Activated naive CD4-positive, alpha-beta T cell treated with anti-CD3 and anti-CD28 coated beads, Interleukin-2, amount 10 ng/mL, durations not matched to agents 7 days and 5 days (primary cell): ENCODE measurements at regions of chr6 and their contacts with region 1.

Region 1: DNA sequence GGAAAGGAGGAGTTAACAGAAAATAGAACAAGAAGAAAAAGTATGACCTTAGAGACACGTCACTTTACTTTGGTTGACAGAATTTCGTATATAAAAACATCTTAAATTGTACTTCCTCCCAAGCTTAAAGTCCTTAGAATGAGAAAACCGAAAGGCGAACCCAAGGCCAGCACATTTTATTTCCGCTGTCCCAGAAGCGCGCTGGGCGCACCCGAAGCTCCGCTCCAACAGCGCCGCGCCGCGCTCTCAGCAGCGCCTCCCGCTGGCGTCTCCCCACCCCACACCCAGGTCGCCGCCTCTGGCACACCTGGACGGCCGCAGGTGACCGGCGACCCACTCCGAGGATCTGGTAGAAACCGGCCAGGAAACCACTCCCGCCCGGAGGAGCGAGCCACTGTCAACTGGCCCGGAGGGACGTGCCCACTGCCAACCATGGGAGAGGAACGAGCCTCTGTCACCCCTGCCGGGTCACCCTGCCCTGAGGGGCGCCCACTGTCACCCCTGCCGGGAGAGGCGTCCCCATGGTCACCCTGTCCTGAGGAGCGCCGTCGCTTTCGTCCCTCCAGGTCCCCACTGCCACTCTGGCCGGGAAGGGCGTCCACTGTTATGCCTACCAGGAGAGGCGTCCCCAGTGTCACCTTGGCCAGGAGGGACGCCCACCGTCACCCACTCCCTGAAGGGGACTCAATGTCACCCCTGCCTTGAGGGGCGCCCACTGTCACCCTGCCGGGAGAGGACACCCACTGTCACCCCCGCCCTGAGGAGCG is 824 bp downstream of the MPC1 start:
- DNase-seq: peak; percentile 79
- H3K4me3 Mint-ChIP-seq: peak overlapping the region; percentile 91
- H3K27ac Mint-ChIP-seq: peak overlapping the region; percentile 90
- H3K4me1 Mint-ChIP-seq: peaks cover 24% of the 10 kb centered on the region
- H3K27me3 Mint-ChIP-seq: no peaks in the 10 kb centered on the region

Region 2: DNA sequence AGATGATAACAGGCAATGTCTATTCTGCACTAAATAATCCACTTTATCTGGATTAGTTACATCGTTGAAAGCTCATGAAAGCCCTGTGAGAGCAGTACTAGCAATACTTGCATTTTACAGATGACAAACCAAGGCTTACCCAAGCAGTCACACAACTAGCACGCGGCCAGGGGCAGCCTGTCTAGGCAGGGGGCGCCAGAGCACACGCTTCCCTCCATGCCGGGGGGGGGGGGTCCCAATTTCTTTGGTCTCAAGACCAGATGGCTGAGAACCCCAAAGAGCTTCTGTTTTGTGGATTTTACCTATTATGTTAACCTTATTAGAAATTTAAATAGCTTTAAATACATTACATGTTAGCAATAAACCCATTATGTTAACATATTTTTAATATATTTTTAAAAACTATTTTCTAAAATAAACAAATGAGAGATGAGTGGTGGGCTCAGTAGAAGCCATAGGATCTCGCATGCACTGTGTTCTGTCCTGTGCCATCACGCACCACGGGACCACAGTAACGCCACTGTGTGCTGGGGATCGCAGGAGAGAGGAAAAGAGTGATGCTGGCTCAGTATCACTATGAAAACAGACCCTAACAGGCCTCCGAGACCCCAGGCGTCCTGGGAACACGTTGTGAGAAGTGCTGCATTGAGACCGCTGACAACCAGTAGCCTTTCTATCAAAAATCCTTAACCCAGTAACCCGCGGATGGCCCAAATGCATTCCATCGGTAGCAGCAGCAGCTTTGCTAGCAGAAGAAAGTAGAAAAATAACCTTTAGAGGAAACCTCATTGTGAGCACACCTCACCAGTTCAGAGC is 68.5 kb before region 1 on chr6:
- CTCF ChIA-PET with region 1: interaction called, 34 read pairs
- DNase-seq: peak; percentile 64
- H3K4me3 Mint-ChIP-seq: no peak overlapping the region
- H3K27ac Mint-ChIP-seq: no peak overlapping the region
- H3K4me1 Mint-ChIP-seq: no peaks in the 10 kb centered on the region
- H3K27me3 Mint-ChIP-seq: peaks cover 39% of the 10 kb centered on the region

Region 3: DNA sequence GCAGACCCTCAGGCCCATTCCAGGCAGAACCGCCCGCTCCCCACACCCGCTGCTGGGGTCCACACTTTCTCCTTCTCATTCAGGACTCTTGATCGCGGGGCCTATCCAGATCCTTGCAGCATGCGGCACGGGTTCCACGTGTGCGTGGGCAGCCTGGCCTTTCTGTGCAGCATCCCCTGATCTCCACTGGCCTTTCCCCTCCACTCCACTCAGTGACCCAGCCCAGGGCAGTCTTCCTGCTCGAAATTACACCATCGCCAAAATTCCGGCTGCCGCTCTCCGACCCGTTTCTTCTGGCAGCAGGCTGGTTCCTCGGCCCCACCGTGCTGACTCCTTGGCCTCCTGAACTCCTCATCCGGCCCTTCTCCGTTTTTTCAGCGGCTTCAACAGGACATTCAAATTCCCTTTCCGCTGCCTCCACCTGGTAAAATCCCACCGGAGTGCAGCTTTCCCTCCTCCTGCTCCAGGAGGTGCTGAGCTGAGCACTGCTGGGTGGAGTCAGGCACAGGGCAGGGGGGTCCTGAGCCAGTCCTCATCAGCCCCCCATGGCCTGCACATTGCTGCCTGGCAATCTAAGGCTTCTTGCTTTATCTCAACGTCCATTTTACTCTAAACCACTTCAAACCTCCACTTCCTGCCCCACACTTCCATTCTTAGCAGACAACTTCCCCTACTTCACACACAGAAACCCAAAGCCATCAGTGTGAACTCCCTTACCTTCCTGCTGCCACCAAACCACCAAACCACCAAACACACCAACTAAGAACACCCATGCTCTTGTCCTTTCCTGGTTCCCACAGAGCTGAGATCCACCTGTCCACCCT is 48.5 kb before region 1 on chr6:
- CTCF ChIA-PET with region 1: interaction called, 10 read pairs
- DNase-seq: peak; percentile 63
- H3K4me3 Mint-ChIP-seq: peak overlapping the region; percentile 2
- H3K27ac Mint-ChIP-seq: peak overlapping the region; percentile 8
- H3K4me1 Mint-ChIP-seq: peaks cover 44% of the 10 kb centered on the region
- H3K27me3 Mint-ChIP-seq: peaks cover 8% of the 10 kb centered on the region